ENCODE measurements at regions of chr3 and their contacts with region 1.

Region 1: GRCh38 chr3:150183678-150184425 is 213.2 kb upstream of the PFN2 start:
- DNase-seq: peak; percentile 37
- ATAC-seq: peak; percentile 100
- H3K4me3 ChIP-seq: no peak overlapping the region
- H3K27ac ChIP-seq: no peak overlapping the region
- H3K4me1 ChIP-seq: no peaks in the 10 kb centered on the region
- H3K27me3 ChIP-seq: no peaks in the 10 kb centered on the region
- CTCF ChIP-seq: peak; percentile 70 to 81 (median 73)
- EP300 ChIP-seq: no peak
- POLR2A ChIP-seq: no peak
- RAD21 ChIP-seq: peak; percentile 82

Region 2: DNA sequence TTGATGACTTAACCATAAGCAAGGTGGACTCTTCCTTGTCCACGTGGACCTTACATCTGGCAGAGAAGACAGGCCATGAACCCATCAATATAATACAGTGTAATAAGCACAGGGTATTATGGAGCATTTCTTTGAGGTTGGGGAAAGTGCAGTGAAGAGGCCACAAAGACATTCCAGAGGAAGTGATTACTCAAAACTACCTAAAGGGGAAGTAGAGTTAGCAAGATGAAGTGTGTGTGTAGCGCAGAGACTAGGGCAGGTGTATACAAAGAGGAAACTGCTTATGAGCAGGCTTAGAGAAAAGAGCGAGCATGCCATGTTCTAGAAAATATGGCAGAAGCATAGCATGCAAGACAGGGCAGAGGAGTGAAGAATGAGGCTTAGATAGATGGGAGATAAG is 980.1 kb before region 1 on chr3:
- CTCF ChIA-PET with region 1: no interaction called
- POLR2A ChIA-PET with region 1: no interaction called
- RAD21 ChIA-PET with region 1: no interaction called
- SMC1A ChIA-PET with region 1: no interaction called
- in situ Hi-C with region 1: no loop called
- intact Hi-C with region 1: no loop called
- DNase-seq: peak; percentile 50
- ATAC-seq: peak; percentile 95
- H3K4me3 ChIP-seq: no peak overlapping the region
- H3K27ac ChIP-seq: no peak overlapping the region
- H3K4me1 ChIP-seq: peaks cover 11% of the 10 kb centered on the region
- H3K27me3 ChIP-seq: no peaks in the 10 kb centered on the region
- CTCF ChIP-seq: no peak
- EP300 ChIP-seq: no peak
- POLR2A ChIP-seq: no peak
- RAD21 ChIP-seq: 0 out of 2 replicates have a peak, but pooled peaks have one; percentile 18

Region 3: GRCh38 chr3:149512209-149512782 is 671.6 kb before region 1 on chr3:
- CTCF ChIA-PET with region 1: interaction called, 3 read pairs
- POLR2A ChIA-PET with region 1: no interaction called
- RAD21 ChIA-PET with region 1: no interaction called
- SMC1A ChIA-PET with region 1: no interaction called
- in situ Hi-C with region 1: loop called (anchors 25 kb)
- intact Hi-C with region 1: no loop called
- DNase-seq: no peak
- ATAC-seq: peak; percentile 92
- H3K4me3 ChIP-seq: no peak overlapping the region
- H3K27ac ChIP-seq: no peak overlapping the region
- H3K4me1 ChIP-seq: no peaks in the 10 kb centered on the region; the same call in 1 of the 2 replicates
- H3K27me3 ChIP-seq: no peaks in the 10 kb centered on the region
- CTCF ChIP-seq: peak; percentile 81 to 85 (median 84); a peak in 5 of 6 replicates
- EP300 ChIP-seq: no peak
- POLR2A ChIP-seq: no peak
- RAD21 ChIP-seq: peak; percentile 93

Region 4: DNA sequence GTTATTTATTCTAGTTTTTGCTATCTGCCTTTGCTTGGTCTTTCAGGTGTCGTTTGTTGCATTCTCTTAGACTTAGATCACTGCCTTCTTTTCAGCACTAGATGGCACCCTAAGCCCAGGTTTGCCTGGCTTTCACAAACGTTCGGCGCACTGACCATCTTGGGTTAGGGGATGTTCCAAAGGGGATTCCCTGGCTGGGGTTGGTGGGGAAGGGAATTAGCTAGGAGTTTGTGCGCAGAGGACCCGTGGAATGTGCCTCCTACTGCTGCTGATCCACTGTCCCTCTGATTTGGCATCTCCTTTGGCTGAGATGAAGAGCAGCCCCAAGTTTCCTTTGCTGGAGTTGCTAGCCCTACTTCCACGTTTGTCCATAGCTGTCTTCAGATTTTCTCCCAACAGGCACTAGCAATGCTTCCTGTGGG is 247.0 kb before region 1 on chr3:
- CTCF ChIA-PET with region 1: interaction called, 63 read pairs
- POLR2A ChIA-PET with region 1: no interaction called
- RAD21 ChIA-PET with region 1: interaction called, 22 read pairs
- SMC1A ChIA-PET with region 1: interaction called, 45 read pairs
- in situ Hi-C with region 1: no loop called
- intact Hi-C with region 1: loop called (anchors 1 kb)
- DNase-seq: peak; percentile 37
- ATAC-seq: peak; percentile 93
- H3K4me3 ChIP-seq: no peak overlapping the region
- H3K27ac ChIP-seq: no peak overlapping the region
- H3K4me1 ChIP-seq: no peaks in the 10 kb centered on the region
- H3K27me3 ChIP-seq: no peaks in the 10 kb centered on the region
- CTCF ChIP-seq: peak; percentile 79 to 87 (median 82)
- EP300 ChIP-seq: no peak
- POLR2A ChIP-seq: no peak
- RAD21 ChIP-seq: peak; percentile 80

Region 5: GRCh38 chr3:149975919-149976318 is 207.9 kb before region 1 on chr3:
- CTCF ChIA-PET with region 1: interaction called, 22 read pairs
- POLR2A ChIA-PET with region 1: no interaction called
- RAD21 ChIA-PET with region 1: interaction called, 111 read pairs
- SMC1A ChIA-PET with region 1: interaction called, 10 read pairs
- in situ Hi-C with region 1: no loop called
- intact Hi-C with region 1: no loop called
- DNase-seq: no peak
- ATAC-seq: peak; percentile 60
- H3K4me3 ChIP-seq: no peak overlapping the region
- H3K27ac ChIP-seq: no peak overlapping the region
- H3K4me1 ChIP-seq: no peaks in the 10 kb centered on the region
- H3K27me3 ChIP-seq: 0 out of 4 replicates have a peak, but pooled peaks cover 0 to 4% of the 10 kb centered on the region in 2 experiments
- CTCF ChIP-seq: peak; percentile 14 to 39 (median 30); a peak in 4 of 6 replicates
- EP300 ChIP-seq: no peak
- POLR2A ChIP-seq: no peak
- RAD21 ChIP-seq: 0 out of 2 replicates have a peak, but pooled peaks have one; percentile 21

Region 6: GRCh38 chr3:150114873-150115540 is 68.8 kb before region 1 on chr3:
- CTCF ChIA-PET with region 1: interaction called, 3 read pairs
- POLR2A ChIA-PET with region 1: no interaction called
- RAD21 ChIA-PET with region 1: interaction called, 5 read pairs
- SMC1A ChIA-PET with region 1: interaction called, 10 read pairs
- in situ Hi-C with region 1: no loop called
- intact Hi-C with region 1: loop called (anchors 5 kb)
- DNase-seq: peak; percentile 69
- ATAC-seq: peak; percentile 95
- H3K4me3 ChIP-seq: peak overlapping the region; percentile 19; the same call in 1 of the 2 replicates
- H3K27ac ChIP-seq: peak overlapping the region; percentile 43; the same call in 1 of the 2 replicates
- H3K4me1 ChIP-seq: peaks cover 27% of the 10 kb centered on the region
- H3K27me3 ChIP-seq: no peaks in the 10 kb centered on the region
- CTCF ChIP-seq: no peak
- EP300 ChIP-seq: peak; percentile 70 to 89; a peak in 3 of 4 replicates
- POLR2A ChIP-seq: no peak
- RAD21 ChIP-seq: no peak

Region 7: DNA sequence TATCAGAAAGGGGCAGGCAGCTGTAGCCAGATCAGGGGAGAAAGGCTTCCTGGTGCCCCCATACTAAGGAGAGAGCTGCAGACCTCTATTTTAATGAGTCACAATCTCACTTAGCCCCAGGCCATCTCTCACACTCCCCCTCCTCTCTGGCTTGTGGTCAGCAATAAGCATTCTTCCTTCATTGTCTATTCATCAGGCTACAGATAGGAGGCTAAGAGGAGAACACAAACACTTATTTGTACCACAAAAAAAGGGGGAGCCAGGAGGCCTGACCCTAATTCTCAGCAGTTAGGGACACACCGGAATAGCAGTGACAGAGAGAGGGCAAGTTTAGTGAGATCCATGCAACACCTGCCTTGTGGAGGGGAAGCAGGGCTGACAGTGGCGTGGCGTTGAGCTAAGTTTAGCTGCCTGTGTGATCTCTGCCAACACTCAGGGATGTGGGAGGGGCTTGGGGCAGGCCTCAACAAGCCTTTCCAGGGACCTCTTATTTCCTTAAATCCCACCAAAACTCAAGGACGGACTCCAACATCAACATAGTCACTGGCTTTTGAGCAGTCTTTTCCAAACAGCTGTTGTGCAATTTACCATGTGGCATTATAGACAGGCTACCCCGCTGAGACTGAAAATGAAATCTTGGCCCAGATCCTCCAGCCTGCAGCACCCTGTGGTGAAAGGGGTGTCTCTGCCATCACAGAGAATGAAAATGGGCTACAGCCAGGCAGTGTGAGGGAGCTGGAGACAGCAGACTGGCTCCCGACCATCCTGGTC is 32.4 kb after region 1 on chr3:
- CTCF ChIA-PET with region 1: interaction called, 9 read pairs
- POLR2A ChIA-PET with region 1: no interaction called
- RAD21 ChIA-PET with region 1: interaction called, 4 read pairs
- SMC1A ChIA-PET with region 1: interaction called, 7 read pairs
- in situ Hi-C with region 1: no loop called
- intact Hi-C with region 1: loop called (anchors 2 kb)
- DNase-seq: no peak
- ATAC-seq: no peak; the same call in 1 of the 3 replicates
- H3K4me3 ChIP-seq: no peak overlapping the region
- H3K27ac ChIP-seq: no peak overlapping the region
- H3K4me1 ChIP-seq: no peaks in the 10 kb centered on the region
- H3K27me3 ChIP-seq: no peaks in the 10 kb centered on the region
- CTCF ChIP-seq: no peak
- EP300 ChIP-seq: no peak
- POLR2A ChIP-seq: no peak
- RAD21 ChIP-seq: no peak